MCF 10A (cell line): ENCODE measurements at regions of chr17 and their contacts with region 1.

Region 1: DNA sequence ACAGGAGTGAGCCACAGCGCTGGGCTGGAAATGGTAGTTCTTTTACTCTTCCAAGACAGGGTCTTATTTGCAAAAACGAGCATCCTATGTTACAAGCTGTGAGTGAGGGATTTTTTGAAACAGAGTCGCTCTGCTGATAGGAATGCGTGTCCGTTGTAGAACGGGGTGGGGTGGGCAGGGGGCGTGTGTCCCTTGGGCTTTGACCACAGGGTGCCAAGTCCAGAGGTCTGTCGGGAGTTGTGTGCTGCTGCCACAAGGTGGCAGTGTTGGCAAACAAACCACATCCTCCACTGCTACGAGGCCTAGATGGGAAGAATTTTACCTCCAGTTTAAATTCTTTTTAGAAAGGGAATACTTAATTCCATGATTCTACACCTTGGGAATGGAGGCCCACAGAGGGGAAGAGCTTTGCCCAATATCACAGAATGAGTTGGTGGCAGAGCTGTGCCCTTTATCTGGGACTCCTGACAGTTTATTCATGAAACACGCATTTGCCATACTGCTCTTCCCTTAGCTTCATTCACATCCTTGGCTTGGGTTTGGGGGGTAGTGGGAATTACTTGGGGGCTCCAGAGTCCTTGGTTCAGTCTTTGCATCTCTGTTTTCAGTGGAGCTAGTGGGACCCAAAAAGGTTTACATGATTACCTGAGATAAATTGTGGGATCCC is 30.6 kb upstream of the ETV4 start:
- DNase-seq: peak; percentile 75
- H3K4me3 Mint-ChIP-seq: no peak overlapping the region
- H3K27ac Mint-ChIP-seq: no peak overlapping the region
- H3K4me1 Mint-ChIP-seq: peaks cover 17% of the 10 kb centered on the region
- H3K27me3 Mint-ChIP-seq: no peaks in the 10 kb centered on the region
- CTCF ChIP-seq: peak; percentile 96

Region 2: DNA sequence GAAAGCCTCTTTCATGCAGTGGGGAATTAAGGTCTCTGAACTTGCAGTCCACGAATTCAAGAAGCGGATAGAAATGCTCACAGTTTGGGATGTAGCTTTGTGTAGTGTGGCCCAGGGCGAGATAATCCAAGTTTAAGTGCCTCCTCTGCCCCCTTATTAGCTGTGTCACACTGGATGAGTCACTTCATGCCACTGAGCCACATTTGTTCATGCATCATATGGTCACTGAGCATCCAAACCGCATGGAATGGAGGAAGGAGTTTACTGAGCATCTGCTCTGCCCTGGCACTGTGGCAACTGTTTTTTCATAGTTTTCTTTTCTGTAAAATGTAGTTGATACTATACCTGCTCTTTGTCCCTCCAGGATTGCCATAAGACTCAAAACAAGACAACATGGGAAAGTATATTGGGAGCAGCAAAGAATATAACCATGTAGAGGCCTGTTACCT is 108.0 kb before region 1 on chr17:
- CTCF ChIA-PET with region 1: no interaction called
- POLR2A ChIA-PET with region 1: no interaction called
- intact Hi-C with region 1: no loop called
- DNase-seq: peak; percentile 57
- H3K4me3 Mint-ChIP-seq: peak overlapping the region; percentile 9
- H3K27ac Mint-ChIP-seq: peak overlapping the region; percentile 88
- H3K4me1 Mint-ChIP-seq: peaks cover 27% of the 10 kb centered on the region
- H3K27me3 Mint-ChIP-seq: no peaks in the 10 kb centered on the region
- CTCF ChIP-seq: no peak

Region 3: DNA sequence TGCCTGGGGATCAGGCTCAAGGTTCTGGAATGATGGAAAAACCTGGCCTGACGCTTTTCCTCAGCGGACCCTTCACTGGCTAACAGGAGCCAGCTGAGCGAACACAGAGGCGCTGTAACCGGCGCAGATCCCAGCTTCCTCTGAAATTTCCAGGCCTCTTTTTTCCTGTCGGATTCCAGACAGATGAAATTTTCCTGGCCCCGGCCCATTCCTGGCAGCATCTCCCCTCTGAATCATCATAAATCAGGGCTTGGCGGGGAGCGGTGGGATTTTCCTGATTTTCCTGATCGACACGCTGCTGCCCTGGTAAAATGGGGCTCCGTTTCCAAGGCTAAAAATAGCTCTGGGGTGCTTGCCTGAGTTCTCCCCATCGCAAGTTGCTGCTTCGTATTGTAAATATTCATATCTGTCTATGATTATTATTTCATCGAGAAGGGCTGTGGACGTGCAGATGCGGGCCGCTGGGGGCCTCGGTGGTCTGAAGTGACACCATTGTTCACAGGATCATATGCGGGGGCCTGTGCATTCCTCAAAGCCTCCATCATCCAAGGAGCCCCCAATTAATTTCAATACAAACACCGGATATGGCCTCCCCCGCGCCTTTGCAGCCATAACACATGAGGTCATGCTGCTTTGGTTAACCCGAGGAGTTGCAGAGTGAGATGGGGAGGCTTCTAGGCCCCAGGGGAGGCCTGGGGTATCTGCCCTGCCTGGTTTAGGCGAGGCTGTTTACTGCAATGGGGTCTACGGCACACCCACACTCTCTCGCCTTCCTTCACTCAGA is 15.3 kb after region 1 on chr17:
- CTCF ChIA-PET with region 1: interaction called, 11 read pairs
- POLR2A ChIA-PET with region 1: interaction called, 4 read pairs
- intact Hi-C with region 1: no loop called
- DNase-seq: peak; percentile 62
- H3K4me3 Mint-ChIP-seq: no peak overlapping the region
- H3K27ac Mint-ChIP-seq: no peak overlapping the region
- H3K4me1 Mint-ChIP-seq: peaks cover 6% of the 10 kb centered on the region
- H3K27me3 Mint-ChIP-seq: no peaks in the 10 kb centered on the region
- CTCF ChIP-seq: no peak

Region 4: DNA sequence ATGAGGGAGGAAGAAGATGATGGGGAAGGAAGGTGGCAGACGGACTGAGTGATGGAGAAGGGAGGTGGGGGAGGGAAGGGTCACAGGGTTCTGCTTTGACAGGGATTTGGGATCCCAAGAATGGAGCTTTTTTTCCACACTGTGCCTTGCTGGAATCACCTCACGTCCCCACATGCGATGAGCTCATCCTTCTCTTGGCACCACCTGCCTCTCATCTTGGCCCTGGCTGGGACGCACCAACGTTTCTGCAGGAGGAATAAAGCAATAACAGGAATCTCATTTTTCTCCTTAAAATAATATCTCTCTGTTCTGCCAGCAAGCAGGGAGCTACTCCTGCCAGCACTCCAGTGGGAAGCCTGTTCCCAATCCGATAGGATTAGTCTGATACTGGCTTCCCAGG is 37.2 kb after region 1 on chr17:
- CTCF ChIA-PET with region 1: interaction called, 12 read pairs
- POLR2A ChIA-PET with region 1: interaction called, 4 read pairs
- intact Hi-C with region 1: no loop called
- DNase-seq: no peak
- H3K4me3 Mint-ChIP-seq: no peak overlapping the region
- H3K27ac Mint-ChIP-seq: no peak overlapping the region
- H3K4me1 Mint-ChIP-seq: peaks cover 14% of the 10 kb centered on the region
- H3K27me3 Mint-ChIP-seq: no peaks in the 10 kb centered on the region
- CTCF ChIP-seq: no peak

Region 5: DNA sequence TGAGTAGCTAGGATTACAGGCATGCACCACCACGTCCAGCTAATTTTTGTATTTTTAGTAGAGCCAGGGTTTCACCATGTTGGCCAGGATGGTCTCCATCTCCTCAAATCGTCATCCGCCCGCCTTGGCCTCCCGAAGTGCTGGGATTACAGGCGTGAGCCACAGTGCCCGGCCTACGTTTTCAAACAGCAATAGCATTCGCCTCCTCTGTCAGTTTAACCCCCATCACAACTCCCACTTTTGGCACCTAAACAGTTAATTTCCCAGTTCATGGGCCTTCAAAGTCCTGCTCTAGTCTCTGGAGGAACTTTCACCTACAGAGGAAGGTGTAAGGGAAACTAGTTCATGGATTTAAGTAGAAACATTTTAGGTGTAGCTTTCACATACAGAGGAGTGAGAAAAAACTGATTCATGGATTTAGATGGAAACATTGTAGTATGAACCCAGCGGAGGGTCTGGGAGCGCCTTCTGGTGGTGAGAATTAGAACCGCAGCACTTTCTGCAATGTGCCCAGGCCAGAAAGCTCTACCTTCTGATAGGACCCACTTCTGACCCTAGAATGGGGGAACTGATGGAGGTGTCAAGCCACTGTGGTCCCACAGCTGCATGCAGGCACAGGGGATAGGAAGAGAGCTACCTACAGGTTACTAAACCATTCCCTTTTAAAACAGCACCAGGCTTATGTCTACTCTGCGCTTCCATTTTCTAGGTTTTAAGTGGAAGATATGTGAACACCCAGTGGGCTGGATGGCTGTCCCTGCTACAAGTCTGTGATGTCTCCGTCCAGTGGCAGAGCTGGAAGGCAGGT is 97.0 kb after region 1 on chr17:
- CTCF ChIA-PET with region 1: interaction called, 25 read pairs
- POLR2A ChIA-PET with region 1: interaction called, 14 read pairs
- intact Hi-C with region 1: loop called (anchors 1 kb)
- DNase-seq: peak; percentile 66
- H3K4me3 Mint-ChIP-seq: no peak overlapping the region
- H3K27ac Mint-ChIP-seq: no peak overlapping the region
- H3K4me1 Mint-ChIP-seq: peaks cover 9% of the 10 kb centered on the region
- H3K27me3 Mint-ChIP-seq: no peaks in the 10 kb centered on the region
- CTCF ChIP-seq: peak; percentile 91

Region 6: DNA sequence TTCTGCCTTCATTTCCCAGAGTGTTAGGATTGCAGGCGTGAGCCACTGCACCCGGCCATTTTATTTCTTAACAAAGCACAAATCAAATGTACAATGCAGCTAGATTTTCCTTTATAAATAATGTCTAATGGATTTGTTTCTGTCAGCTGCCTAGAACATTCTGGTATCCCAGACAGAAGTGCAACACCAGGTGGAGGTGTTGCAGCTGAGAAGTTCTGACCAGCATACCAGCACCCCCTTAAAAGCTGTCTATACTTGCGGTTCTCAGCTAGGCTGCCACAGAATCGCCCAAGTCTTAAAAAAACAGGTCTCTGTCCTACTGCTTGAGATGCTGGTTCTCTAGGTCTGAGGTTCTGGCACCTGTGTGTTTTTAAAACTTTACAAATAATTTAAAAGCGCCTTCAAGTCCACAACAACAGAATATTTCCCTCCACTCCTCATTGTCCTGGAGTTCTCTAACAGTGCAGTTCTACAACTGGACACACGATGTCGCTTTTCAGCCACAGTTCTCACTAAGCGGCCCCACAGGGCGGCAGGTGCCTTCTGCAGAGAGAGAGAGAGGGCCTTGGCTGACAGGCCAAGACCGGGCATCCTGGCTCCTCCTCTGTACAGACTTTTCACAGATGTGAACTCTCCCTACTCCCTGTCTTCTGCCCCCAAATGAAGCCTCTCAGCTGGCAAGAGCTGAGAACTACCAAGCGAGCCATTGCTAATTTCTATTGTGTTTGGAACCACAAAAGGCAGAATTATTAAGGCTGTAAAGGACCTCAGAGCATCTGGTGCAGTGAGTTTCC is 117.6 kb after region 1 on chr17:
- CTCF ChIA-PET with region 1: interaction called, 11 read pairs
- POLR2A ChIA-PET with region 1: no interaction called
- intact Hi-C with region 1: no loop called
- DNase-seq: peak; percentile 86
- H3K4me3 Mint-ChIP-seq: no peak overlapping the region
- H3K27ac Mint-ChIP-seq: no peak overlapping the region
- H3K4me1 Mint-ChIP-seq: no peaks in the 10 kb centered on the region
- H3K27me3 Mint-ChIP-seq: no peaks in the 10 kb centered on the region
- CTCF ChIP-seq: peak; percentile 84

Region 7: GRCh38 chr17:43723697-43724359 is 147.1 kb after region 1 on chr17:
- CTCF ChIA-PET with region 1: no interaction called
- POLR2A ChIA-PET with region 1: no interaction called
- intact Hi-C with region 1: no loop called
- DNase-seq: peak; percentile 77
- H3K4me3 Mint-ChIP-seq: no peak overlapping the region
- H3K27ac Mint-ChIP-seq: no peak overlapping the region
- H3K4me1 Mint-ChIP-seq: peaks cover 6% of the 10 kb centered on the region
- H3K27me3 Mint-ChIP-seq: peaks cover 13% of the 10 kb centered on the region
- CTCF ChIP-seq: no peak